CD4-positive, alpha-beta T cell (primary cell): ENCODE measurements at regions of chr14 and their contacts with region 1.

Region 1: GRCh38 chr14:30982533-30982932 is 42.9 kb upstream of the AP4S1 start:
- DNase-seq: no peak
- ATAC-seq: no peak
- H3K4me3 ChIP-seq: no peak overlapping the region
- H3K4me3 Mint-ChIP-seq: no peak overlapping the region
- H3K27ac ChIP-seq: no peak overlapping the region
- H3K27ac Mint-ChIP-seq: no peak overlapping the region
- H3K4me1 ChIP-seq: peaks cover 4% of the 10 kb centered on the region
- H3K4me1 Mint-ChIP-seq: peaks cover 25% of the 10 kb centered on the region
- H3K27me3 ChIP-seq: no peaks in the 10 kb centered on the region
- H3K27me3 Mint-ChIP-seq: no peaks in the 10 kb centered on the region
- CTCF ChIP-seq: no peak

Region 2: DNA sequence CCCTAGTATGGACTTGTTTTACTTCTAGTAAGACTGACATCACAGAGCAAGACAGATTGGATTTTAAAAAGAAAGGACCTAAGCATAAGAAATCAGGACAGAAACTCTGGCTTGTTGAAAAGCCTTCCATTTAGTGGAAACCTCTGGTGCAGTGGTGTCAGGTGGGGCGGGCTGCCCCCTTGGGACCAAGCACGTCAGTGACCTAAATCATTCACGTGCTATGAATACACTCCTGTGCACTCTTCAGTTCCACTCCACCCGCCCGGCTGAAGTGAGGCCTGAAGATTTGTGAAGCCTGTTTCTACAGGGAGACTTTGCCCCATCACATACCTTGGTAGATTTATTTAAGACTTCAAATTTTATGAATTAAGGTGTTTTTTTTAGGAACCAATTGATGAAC is 101.9 kb after region 1 on chr14:
- CTCF ChIA-PET with region 1: interaction called, 7 read pairs
- POLR2A ChIA-PET with region 1: interaction called, 3 read pairs
- intact Hi-C with region 1: loop called (anchors 1 kb)
- DNase-seq: no peak
- ATAC-seq: no peak
- H3K4me3 ChIP-seq: no peak overlapping the region
- H3K4me3 Mint-ChIP-seq: no peak overlapping the region
- H3K27ac ChIP-seq: no peak overlapping the region
- H3K27ac Mint-ChIP-seq: no peak overlapping the region
- H3K4me1 ChIP-seq: no peaks in the 10 kb centered on the region
- H3K4me1 Mint-ChIP-seq: no peaks in the 10 kb centered on the region
- H3K27me3 ChIP-seq: no peaks in the 10 kb centered on the region
- H3K27me3 Mint-ChIP-seq: no peaks in the 10 kb centered on the region
- CTCF ChIP-seq: no peak